IMR-90 (cell line): ENCODE measurements at regions of chr15 and their contacts with region 1.

Region 1: DNA sequence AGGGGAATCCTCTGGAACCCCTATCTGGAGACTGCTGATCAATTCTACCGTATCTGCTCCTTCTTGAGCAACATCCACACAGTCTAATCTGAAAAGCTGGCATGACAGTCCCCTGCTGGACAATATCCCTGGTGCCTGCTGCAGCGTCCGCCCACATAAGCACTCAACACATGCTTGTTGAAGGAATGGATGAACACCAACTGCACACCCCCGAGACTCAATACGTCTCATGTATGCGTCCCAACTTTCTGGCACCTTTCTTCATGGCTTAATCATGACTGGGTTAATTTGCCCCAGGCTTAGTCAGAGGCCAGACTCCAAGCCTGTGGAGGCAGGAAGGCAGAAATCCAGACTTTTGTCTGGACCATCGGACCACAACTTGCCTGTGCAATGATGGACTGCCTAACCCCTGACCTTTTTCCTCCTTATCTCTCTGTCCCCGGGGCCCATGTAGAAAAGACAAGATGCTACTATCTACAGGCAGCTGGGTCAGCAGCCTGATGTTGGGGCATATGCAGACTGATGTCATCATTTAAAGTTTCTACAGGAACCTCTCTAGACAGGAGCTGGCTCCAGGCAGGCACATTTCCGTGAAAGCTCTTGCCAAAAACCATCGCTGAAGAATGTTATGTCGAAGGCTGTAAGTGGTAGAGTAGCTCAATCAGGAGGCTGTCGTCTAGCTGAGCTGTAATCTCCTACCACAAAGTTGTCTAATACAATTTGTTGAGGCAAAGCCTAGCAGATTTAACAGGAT is 114.1 kb upstream of the TPM1 start:
- DNase-seq: peak; percentile 92
- ATAC-seq: peak; percentile 64
- H3K4me3 ChIP-seq: no peak overlapping the region
- H3K27ac ChIP-seq: peak overlapping the region; percentile 58
- H3K4me1 ChIP-seq: peaks cover 19% of the 10 kb centered on the region
- H3K27me3 ChIP-seq: no peaks in the 10 kb centered on the region
- CTCF ChIP-seq: peak; percentile 56
- POLR2A ChIP-seq: no peak
- RAD21 ChIP-seq: peak; percentile 74

Region 2: DNA sequence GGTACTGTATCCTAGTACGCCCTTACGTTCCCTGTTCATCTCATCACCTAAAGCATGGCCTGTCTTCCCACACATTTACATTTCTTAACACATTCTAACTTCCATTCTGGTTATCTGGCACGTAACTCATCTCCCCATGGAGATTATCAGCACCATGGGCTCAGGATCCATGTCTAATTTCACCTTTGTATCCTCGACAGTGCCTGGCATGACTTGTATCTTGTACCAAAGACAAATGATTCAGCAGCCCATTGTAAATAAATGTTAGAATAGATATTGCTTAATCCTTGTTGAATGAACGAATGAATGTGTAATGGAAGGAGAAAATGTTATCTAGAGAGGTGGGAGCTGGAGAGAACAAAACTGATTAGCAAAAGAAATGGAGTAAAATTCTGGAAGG is 44.4 kb after region 1 on chr15:
- CTCF ChIA-PET with region 1: interaction called, 3 read pairs
- POLR2A ChIA-PET with region 1: no interaction called
- dilution Hi-C with region 1: no loop called
- in situ Hi-C with region 1: no loop called
- intact Hi-C with region 1: loop called (anchors 5 kb)
- DNase-seq: peak; percentile 86
- ATAC-seq: peak; percentile 24
- H3K4me3 ChIP-seq: no peak overlapping the region
- H3K27ac ChIP-seq: no peak overlapping the region
- H3K4me1 ChIP-seq: peaks cover 13% of the 10 kb centered on the region
- H3K27me3 ChIP-seq: no peaks in the 10 kb centered on the region
- CTCF ChIP-seq: no peak
- POLR2A ChIP-seq: no peak
- RAD21 ChIP-seq: no peak; the same call in 1 of the 2 replicates

Region 3: GRCh38 chr15:63079938-63080626 is 151.7 kb after region 1 on chr15:
- CTCF ChIA-PET with region 1: no interaction called
- POLR2A ChIA-PET with region 1: no interaction called
- dilution Hi-C with region 1: no loop called
- in situ Hi-C with region 1: no loop called
- intact Hi-C with region 1: no loop called
- DNase-seq: peak; percentile 78
- ATAC-seq: peak; percentile 71
- H3K4me3 ChIP-seq: no peak overlapping the region
- H3K27ac ChIP-seq: no peak overlapping the region
- H3K4me1 ChIP-seq: peaks cover 23% of the 10 kb centered on the region
- H3K27me3 ChIP-seq: no peaks in the 10 kb centered on the region
- CTCF ChIP-seq: no peak
- POLR2A ChIP-seq: no peak
- RAD21 ChIP-seq: no peak